HepG2 (cell line): ENCODE measurements at regions of chrX and their contacts with region 1.

Region 1: DNA sequence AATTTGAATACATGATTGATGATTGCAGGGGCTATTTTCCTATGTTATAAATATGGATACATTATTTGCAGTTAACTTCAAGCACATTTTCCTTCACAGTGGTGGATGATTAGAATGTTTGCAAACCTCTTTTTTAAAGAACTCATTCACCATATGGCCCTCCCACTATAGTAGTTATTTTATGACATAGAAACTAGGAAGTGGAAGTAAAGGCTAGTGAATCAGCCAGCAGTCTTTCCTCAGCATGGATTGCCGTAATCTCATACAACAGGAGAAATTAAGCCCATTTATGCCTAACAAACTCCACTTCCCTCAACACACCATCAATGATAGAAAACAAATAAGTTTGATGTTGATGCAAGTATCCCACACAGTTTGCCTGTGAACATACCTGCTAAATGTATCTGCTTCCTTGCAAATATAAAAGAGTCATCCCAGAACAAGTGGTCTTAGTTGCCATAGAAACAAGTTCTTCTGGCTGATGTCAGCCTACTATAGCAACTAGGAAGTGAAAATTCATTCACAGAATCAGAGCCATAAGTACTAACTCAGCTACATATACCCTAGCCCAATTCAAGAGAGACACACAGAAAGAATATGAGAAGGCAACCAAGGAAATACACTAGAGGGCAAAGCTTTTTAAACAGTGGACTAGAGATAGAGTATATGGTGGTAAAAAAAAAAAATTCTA is 100.9 kb upstream of the RADX start:
- DNase-seq: no peak
- ATAC-seq: no peak
- H3K4me3 ChIP-seq: no peak overlapping the region
- H3K27ac ChIP-seq: no peak overlapping the region
- H3K4me1 ChIP-seq: no peaks in the 10 kb centered on the region
- H3K27me3 ChIP-seq: no peaks in the 10 kb centered on the region
- CTCF ChIP-seq: no peak
- EP300 ChIP-seq: no peak
- POLR2A ChIP-seq: no peak
- RAD21 ChIP-seq: no peak

Region 2: GRCh38 chrX:106454991-106455390 is 55.9 kb before region 1 on chrX:
- CTCF ChIA-PET with region 1: no interaction called
- POLR2A ChIA-PET with region 1: no interaction called
- in situ Hi-C with region 1: no loop called
- intact Hi-C with region 1: loop called (anchors 2 kb)
- DNase-seq: no peak
- ATAC-seq: no peak
- H3K4me3 ChIP-seq: no peak overlapping the region
- H3K27ac ChIP-seq: no peak overlapping the region
- H3K4me1 ChIP-seq: no peaks in the 10 kb centered on the region
- H3K27me3 ChIP-seq: no peaks in the 10 kb centered on the region
- CTCF ChIP-seq: no peak
- EP300 ChIP-seq: no peak
- POLR2A ChIP-seq: no peak
- RAD21 ChIP-seq: no peak